H1 (cell line): ENCODE measurements at regions of chr15 and their contacts with region 1.

Region 1: GRCh38 chr15:73964736-73965093 is 27.4 kb downstream of the STOML1 start:
- DNase-seq: peak; percentile 91 to 97
- H3K4me3 ChIP-seq: peak overlapping the region in 2 of 4 experiments; percentile 12 to 17; a peak in 1 of 8 replicates
- H3K27ac ChIP-seq: no peak overlapping the region
- H3K4me1 ChIP-seq: peaks cover 0 to 13% (median 6%) of the 10 kb centered on the region in 4 experiments; a peak in 6 of 7 replicates
- H3K27me3 ChIP-seq: no peaks in the 10 kb centered on the region
- CTCF ChIP-seq: peak; percentile 99 to 100 (median 99)
- EP300 ChIP-seq: no peak
- POLR2A ChIP-seq: no peak
- RAD21 ChIP-seq: peak; percentile 69 to 81

Region 2: DNA sequence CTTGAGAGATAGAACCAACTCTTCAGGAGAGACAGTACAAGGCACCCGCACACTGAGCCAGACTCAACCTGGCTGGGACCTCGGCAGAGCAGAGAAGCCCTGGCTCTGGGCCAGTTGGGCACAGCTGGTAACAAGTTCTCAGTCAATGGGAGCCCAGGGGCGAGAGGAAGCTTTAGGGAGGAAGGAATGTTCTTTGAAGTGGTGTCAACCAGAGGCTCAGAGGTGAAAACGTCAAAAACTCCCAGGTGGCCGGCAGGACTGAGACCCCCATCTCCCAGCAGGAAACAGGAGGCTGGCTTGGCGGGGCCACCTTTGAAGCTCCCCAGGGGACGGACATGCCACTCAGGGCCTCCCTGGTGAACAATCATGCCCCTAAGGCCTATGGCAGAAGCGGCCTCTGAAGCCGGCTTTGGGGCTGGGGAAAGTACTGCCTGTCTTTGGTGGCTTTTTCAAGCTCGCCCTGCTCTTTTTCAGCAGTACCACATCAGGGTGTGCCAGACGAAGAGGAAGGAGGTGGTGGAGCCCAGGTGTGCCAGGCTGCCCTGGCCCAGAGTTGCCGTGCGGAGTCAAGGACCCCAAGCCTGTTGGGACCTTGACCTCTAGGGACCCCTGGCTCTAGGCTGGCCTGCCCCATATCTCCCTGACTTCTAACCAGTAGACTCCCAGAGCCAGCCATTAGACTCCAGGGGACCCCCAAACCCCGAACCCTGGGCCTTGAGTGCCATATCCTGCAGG is 108.1 kb before region 1 on chr15:
- CTCF ChIA-PET with region 1: no interaction called
- POLR2A ChIA-PET with region 1: no interaction called
- DNase-seq: no peak
- H3K4me3 ChIP-seq: no peak overlapping the region
- H3K27ac ChIP-seq: no peak overlapping the region
- H3K4me1 ChIP-seq: peaks cover 0 to 4% (median 2%) of the 10 kb centered on the region in 4 experiments; a peak in 3 of 7 replicates
- H3K27me3 ChIP-seq: no peaks in the 10 kb centered on the region; a peak in 2 of 7 replicates
- CTCF ChIP-seq: no peak
- EP300 ChIP-seq: no peak
- POLR2A ChIP-seq: no peak
- RAD21 ChIP-seq: no peak

Region 3: GRCh38 chr15:73897441-73898261 is 67.1 kb before region 1 on chr15:
- CTCF ChIA-PET with region 1: interaction called, 16 read pairs
- POLR2A ChIA-PET with region 1: no interaction called
- DNase-seq: peak; percentile 44 to 85
- H3K4me3 ChIP-seq: no peak overlapping the region
- H3K27ac ChIP-seq: no peak overlapping the region
- H3K4me1 ChIP-seq: peaks cover 0 to 3% (median 1%) of the 10 kb centered on the region in 4 experiments; a peak in 3 of 7 replicates
- H3K27me3 ChIP-seq: no peaks in the 10 kb centered on the region
- CTCF ChIP-seq: peak; percentile 99 to 100 (median 100)
- EP300 ChIP-seq: no peak
- POLR2A ChIP-seq: no peak
- RAD21 ChIP-seq: peak; percentile 88 to 90

Region 4: DNA sequence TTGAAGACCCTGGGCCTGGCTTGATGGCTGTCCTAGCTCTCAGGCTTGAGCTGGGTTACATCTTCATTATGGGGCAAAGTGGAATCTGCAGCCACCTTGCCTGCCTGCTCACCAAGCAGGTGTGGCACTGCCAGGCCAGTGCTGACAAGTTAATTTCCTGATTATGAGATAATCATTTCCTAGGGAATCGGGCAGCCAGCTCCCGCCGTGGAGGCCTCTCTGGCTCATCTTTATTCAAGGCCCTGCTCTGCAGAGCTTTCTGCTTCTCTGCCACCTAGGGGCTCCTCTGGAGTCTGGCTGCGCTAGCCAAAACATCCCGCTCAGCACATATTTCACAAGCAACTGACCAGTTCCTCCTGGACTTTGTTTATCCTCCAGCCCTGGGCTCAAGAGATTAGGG is 28.5 kb before region 1 on chr15:
- CTCF ChIA-PET with region 1: interaction called, 31 read pairs
- POLR2A ChIA-PET with region 1: interaction called, 4 read pairs
- DNase-seq: no peak
- H3K4me3 ChIP-seq: no peak overlapping the region
- H3K27ac ChIP-seq: no peak overlapping the region
- H3K4me1 ChIP-seq: peaks cover 0 to 3% (median 2%) of the 10 kb centered on the region in 4 experiments; a peak in 4 of 7 replicates
- H3K27me3 ChIP-seq: no peaks in the 10 kb centered on the region
- CTCF ChIP-seq: peak in 2 of 3 experiments; percentile 9 to 18; a peak in 2 of 4 replicates
- EP300 ChIP-seq: no peak
- POLR2A ChIP-seq: no peak
- RAD21 ChIP-seq: peak in 1 of 2 experiments; percentile 18; a peak in 1 of 4 replicates

Region 5: DNA sequence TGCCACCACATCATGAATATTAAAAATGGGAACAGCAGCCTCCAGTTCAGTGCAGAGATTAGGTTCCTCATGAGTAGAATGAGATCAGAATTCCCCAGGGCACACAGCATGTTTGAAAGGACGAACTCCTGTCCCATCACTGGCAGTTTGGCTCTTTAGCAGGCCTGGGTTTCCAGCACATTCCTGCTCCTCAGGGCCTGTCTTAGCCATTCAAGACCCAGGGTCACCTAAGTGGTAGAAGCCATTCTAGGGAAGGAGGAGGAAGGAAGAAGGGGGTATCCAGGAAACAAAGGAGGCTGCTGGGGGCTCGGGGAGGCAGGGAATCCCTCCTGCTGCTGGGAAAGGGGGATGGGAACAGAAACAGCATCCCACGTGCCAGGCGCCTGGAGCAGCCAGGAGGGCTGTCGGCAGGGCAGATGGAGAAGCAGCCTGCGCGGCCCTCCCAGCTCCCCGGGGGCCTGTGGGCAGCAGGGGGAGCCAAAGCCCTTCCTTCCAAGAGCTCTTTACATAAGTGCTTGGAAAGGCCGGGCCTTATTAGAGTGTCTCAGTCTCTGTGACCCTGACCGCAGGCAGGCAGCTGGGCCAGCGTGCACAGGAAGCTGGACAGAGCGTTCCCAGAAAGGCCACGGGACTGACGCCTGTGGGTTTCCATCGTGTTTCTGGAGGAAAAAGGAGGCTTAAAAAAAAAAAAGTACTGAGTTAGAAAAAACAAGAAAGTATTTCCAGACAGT is 13.7 kb before region 1 on chr15:
- CTCF ChIA-PET with region 1: interaction called, 55 read pairs
- POLR2A ChIA-PET with region 1: interaction called, 5 read pairs
- DNase-seq: peak; percentile 78 to 89
- H3K4me3 ChIP-seq: no peak overlapping the region; a peak in 1 of 8 replicates
- H3K27ac ChIP-seq: no peak overlapping the region
- H3K4me1 ChIP-seq: peaks cover 6 to 16% (median 12%) of the 10 kb centered on the region in 4 experiments
- H3K27me3 ChIP-seq: no peaks in the 10 kb centered on the region
- CTCF ChIP-seq: peak; percentile 68 to 92 (median 81)
- EP300 ChIP-seq: no peak
- POLR2A ChIP-seq: no peak
- RAD21 ChIP-seq: peak; percentile 81 to 87